ENCODE measurements at regions of chr19 and their contacts with region 1.

Region 1: GRCh38 chr19:10403137-10404021 is at the start of gene CDC37:
- DNase-seq: peak; percentile 95 to 99 (median 98)
- ATAC-seq: peak; percentile 74
- H3K4me3 ChIP-seq: peak within 1 kb of the TSS; percentile 96
- H3K4me3 Mint-ChIP-seq: peak within 1 kb of the TSS; percentile 98
- H3K27ac ChIP-seq: peak within 1 kb of the TSS; percentile 85 to 88
- H3K27ac Mint-ChIP-seq: peak within 1 kb of the TSS; percentile 97
- H3K4me1 ChIP-seq: peaks cover 82% of the 10 kb centered on the region
- H3K4me1 Mint-ChIP-seq: peaks cover 73% of the 10 kb centered on the region
- H3K27me3 ChIP-seq: no peaks in the 10 kb centered on the region
- H3K27me3 Mint-ChIP-seq: peaks cover 3% of the 10 kb centered on the region
- CTCF ChIP-seq: no peak
- total RNA-seq, gene CDC37: 162 to 164 TPM

Region 2: GRCh38 chr19:9834726-9835506 is 568.5 kb before region 1 on chr19 and contains the start of gene PIN1:
- CTCF ChIA-PET with region 1: no interaction called
- POLR2A ChIA-PET with region 1: no interaction called
- intact Hi-C with region 1: loop called in 1 of 2 experiments (anchors 10 kb)
- DNase-seq: peak; percentile 98 to 100 (median 99)
- ATAC-seq: peak; percentile 94
- H3K4me3 ChIP-seq: peak within 1 kb of the TSS; percentile 81
- H3K4me3 Mint-ChIP-seq: peak within 1 kb of the TSS; percentile 96
- H3K27ac ChIP-seq: peak within 1 kb of the TSS; percentile 40 to 76
- H3K27ac Mint-ChIP-seq: peak within 1 kb of the TSS; percentile 94
- H3K4me1 ChIP-seq: peaks cover 33% of the 10 kb centered on the region
- H3K4me1 Mint-ChIP-seq: peaks cover 23% of the 10 kb centered on the region
- H3K27me3 ChIP-seq: no peaks in the 10 kb centered on the region
- H3K27me3 Mint-ChIP-seq: no peaks in the 10 kb centered on the region
- CTCF ChIP-seq: peak; percentile 43
- total RNA-seq, gene PIN1: 33.2 to 35.3 TPM

Region 3: DNA sequence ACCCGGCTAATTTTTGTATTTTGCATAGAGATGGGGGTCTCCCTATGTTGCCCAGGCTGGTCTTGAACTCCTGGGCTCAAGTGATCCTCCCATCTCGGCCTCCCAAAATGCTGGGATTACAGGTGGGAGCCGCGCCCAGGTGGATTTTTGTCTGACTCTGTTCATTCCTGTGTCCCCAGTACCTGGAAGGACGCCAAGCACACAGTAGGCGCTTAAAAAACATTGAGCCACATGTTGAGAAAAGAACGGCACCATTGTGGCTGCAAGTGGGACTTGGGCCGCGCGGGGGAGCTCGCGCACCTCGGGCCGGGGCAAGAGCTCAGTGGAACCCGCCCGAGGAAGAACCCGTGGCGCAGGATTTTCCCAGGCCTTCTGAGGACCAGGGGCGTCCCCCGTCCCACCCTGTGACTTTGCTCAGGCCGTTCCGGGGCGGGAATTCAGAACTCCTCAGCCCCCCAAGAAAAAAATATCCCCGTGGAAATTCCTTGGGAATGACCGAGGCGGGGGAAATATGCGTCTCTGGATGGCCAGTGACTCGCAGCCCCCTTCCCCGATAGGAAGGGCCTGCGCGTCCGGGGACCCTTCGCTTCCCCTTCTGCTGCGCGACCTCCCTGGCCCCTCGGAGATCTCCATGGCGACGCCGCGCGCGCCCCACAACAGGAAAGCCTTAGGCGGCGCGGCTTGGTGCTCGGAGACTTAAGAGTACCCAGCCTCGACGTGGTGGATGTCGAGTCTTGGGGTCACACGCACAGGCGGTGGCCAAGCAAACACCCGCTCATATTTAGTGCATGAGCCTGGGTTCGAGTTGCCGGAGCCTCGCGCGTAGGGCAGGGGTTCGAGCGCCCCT is 133.8 kb before region 1 on chr19:
- CTCF ChIA-PET with region 1: interaction called, 3 read pairs
- POLR2A ChIA-PET with region 1: interaction called, 18 read pairs
- intact Hi-C with region 1: no loop called
- DNase-seq: peak; percentile 72 to 93 (median 86)
- ATAC-seq: peak; percentile 69
- H3K4me3 ChIP-seq: peak overlapping the region; percentile 80
- H3K4me3 Mint-ChIP-seq: peak overlapping the region; percentile 86
- H3K27ac ChIP-seq: peak overlapping the region; percentile 77 to 95
- H3K27ac Mint-ChIP-seq: peak overlapping the region; percentile 80
- H3K4me1 ChIP-seq: peaks cover 36% of the 10 kb centered on the region
- H3K4me1 Mint-ChIP-seq: peaks cover 38% of the 10 kb centered on the region
- H3K27me3 ChIP-seq: no peaks in the 10 kb centered on the region
- H3K27me3 Mint-ChIP-seq: no peaks in the 10 kb centered on the region
- CTCF ChIP-seq: peak; percentile 94

Region 4: DNA sequence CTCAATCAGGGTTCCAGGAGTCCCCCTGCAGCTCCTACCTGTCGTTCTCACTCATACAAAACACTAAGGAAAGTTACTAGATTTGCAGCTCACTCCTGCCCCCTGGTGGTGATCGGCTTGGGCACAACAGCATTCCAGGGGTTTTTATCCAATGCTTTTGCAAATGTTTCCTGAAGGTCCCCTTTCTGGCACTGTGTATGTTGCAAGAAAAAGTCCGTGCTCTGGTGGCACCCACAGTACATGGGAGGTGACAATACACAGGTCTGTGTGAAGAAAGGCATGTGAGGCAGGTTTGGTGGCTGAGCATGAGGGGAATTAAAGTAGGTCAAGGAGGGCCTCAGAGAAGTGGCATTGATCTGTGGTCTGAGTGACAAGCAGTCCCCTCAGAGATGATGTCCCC is 14.4 kb before region 1 on chr19:
- CTCF ChIA-PET with region 1: interaction called, 11 read pairs
- POLR2A ChIA-PET with region 1: no interaction called
- intact Hi-C with region 1: no loop called
- DNase-seq: peak; percentile 72 to 94 (median 82)
- ATAC-seq: peak; percentile 62
- H3K4me3 ChIP-seq: no peak overlapping the region
- H3K4me3 Mint-ChIP-seq: no peak overlapping the region
- H3K27ac ChIP-seq: no peak overlapping the region
- H3K27ac Mint-ChIP-seq: no peak overlapping the region
- H3K4me1 ChIP-seq: peaks cover 7% of the 10 kb centered on the region
- H3K4me1 Mint-ChIP-seq: peaks cover 4% of the 10 kb centered on the region
- H3K27me3 ChIP-seq: no peaks in the 10 kb centered on the region
- H3K27me3 Mint-ChIP-seq: no peaks in the 10 kb centered on the region
- CTCF ChIP-seq: peak; percentile 96

Region 5: DNA sequence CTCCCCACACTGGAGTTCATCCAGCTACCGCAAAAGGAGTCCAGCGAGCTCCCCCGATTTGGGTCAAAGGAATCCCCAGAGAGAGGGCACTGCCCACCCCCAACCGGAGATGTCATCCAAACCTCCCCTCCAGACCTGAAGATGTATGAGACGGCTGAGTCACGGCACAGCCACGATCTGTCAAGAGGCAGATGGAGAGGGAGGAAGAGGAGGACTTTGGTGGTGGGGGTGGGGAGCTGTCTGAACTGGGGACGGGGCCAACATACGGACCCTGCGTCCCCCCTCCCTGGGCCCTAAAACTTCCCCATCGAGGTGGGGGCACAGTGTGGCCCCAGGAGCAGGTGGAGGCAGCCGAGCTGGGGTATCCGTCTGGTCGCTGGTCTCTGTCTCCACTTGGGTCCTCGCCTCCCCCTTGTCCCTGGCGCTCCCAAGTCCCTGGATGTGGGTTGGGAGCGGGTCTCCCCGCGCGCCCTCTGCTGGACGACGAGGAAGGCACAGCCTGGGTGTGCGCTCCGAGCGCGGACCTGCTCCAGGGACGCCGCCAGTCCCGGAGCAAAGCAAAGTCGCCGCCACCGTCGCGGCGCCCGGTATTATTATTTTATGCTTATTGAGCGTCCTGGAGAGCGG is 20.7 kb after region 1 on chr19:
- CTCF ChIA-PET with region 1: interaction called, 21 read pairs
- POLR2A ChIA-PET with region 1: interaction called, 27 read pairs
- intact Hi-C with region 1: loop called in 1 of 2 experiments (anchors 1 kb)
- DNase-seq: peak in 12 of 14 experiments; percentile 48 to 85 (median 62)
- ATAC-seq: peak; percentile 21
- H3K4me3 ChIP-seq: peak overlapping the region; percentile 46
- H3K4me3 Mint-ChIP-seq: no peak overlapping the region
- H3K27ac ChIP-seq: no peak overlapping the region
- H3K27ac Mint-ChIP-seq: peak overlapping the region; percentile 16
- H3K4me1 ChIP-seq: peaks cover 80% of the 10 kb centered on the region
- H3K4me1 Mint-ChIP-seq: peaks cover 53% of the 10 kb centered on the region
- H3K27me3 ChIP-seq: peaks cover 51 to 60% of the 10 kb centered on the region in 2 experiments
- H3K27me3 Mint-ChIP-seq: peaks cover 80% of the 10 kb centered on the region
- CTCF ChIP-seq: peak; percentile 93

Region 6: GRCh38 chr19:10478903-10479384 is 75.6 kb after region 1 on chr19:
- CTCF ChIA-PET with region 1: interaction called, 6 read pairs
- POLR2A ChIA-PET with region 1: no interaction called
- intact Hi-C with region 1: loop called (anchors 2 to 5 kb)
- DNase-seq: peak; percentile 79 to 96 (median 88)
- ATAC-seq: peak; percentile 99
- H3K4me3 ChIP-seq: peak overlapping the region; percentile 40
- H3K4me3 Mint-ChIP-seq: peak overlapping the region; percentile 83
- H3K27ac ChIP-seq: peak overlapping the region in 1 of 2 donors; percentile 21
- H3K27ac Mint-ChIP-seq: peak overlapping the region; percentile 89
- H3K4me1 ChIP-seq: peaks cover 17% of the 10 kb centered on the region
- H3K4me1 Mint-ChIP-seq: peaks cover 9% of the 10 kb centered on the region
- H3K27me3 ChIP-seq: no peaks in the 10 kb centered on the region
- H3K27me3 Mint-ChIP-seq: no peaks in the 10 kb centered on the region
- CTCF ChIP-seq: peak; percentile 93

Region 7: DNA sequence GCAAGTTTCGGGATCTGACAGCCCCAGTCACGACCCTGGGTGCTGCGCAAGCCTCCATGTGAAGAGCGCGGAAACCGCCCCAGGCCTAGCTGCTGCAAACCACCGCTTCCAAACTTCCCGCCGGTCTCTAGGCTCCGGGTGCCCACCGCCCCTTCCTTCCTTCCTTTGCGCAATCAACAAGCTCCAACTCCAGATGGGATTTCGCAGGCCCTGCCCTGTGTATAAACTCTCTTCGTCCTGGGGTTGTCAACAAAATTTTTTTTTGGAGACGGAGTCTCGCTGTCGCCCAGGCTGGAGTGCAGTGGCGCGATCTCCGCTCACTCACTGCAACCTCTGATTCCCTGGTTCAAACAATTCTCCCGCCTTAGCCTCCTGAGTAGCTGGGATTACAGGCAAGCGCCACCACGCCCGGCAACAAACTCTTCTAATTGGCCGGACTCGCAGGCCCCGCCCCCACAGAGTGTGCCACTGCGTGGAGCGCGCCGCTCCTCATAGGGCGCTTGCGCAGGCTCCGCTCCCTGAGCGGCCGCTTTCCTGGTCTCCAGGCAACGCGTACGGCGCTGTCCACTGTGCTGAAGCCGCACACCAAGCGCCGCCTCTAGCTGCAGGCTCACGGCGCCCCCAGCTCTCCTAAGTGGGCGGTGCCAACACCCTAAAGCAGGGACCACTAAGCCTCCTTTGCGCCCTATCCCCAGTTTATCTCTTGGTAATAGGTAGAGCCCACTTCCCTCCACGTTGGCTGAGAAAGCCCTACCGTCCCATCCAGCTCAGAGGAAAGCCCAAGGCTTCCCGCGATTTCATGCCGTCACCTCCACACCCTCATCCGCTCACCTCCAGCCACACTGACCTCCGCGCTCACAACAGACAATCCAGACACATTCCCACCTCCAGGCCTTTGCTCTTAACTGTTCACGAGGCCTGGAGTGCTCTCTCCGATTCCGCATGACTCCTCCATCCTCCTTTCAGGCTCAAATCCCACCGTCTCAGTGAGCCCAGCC is 292.3 kb after region 1 on chr19:
- CTCF ChIA-PET with region 1: no interaction called
- POLR2A ChIA-PET with region 1: no interaction called
- intact Hi-C with region 1: loop called in 1 of 2 experiments (anchors 5 kb)
- DNase-seq: peak; percentile 70 to 95 (median 84)
- ATAC-seq: peak; percentile 97
- H3K4me3 ChIP-seq: peak overlapping the region; percentile 41
- H3K4me3 Mint-ChIP-seq: peak overlapping the region; percentile 85
- H3K27ac ChIP-seq: no peak overlapping the region
- H3K27ac Mint-ChIP-seq: peak overlapping the region; percentile 31
- H3K4me1 ChIP-seq: peaks cover 17% of the 10 kb centered on the region
- H3K4me1 Mint-ChIP-seq: peaks cover 17% of the 10 kb centered on the region
- H3K27me3 ChIP-seq: peaks cover 0 to 7% of the 10 kb centered on the region in 2 experiments
- H3K27me3 Mint-ChIP-seq: peaks cover 18% of the 10 kb centered on the region
- CTCF ChIP-seq: no peak

Measured in CD4-positive, alpha-beta T cell (primary cell).